Panc1 (cell line): ENCODE measurements at regions of chr5 and their contacts with region 1.

Region 1: DNA sequence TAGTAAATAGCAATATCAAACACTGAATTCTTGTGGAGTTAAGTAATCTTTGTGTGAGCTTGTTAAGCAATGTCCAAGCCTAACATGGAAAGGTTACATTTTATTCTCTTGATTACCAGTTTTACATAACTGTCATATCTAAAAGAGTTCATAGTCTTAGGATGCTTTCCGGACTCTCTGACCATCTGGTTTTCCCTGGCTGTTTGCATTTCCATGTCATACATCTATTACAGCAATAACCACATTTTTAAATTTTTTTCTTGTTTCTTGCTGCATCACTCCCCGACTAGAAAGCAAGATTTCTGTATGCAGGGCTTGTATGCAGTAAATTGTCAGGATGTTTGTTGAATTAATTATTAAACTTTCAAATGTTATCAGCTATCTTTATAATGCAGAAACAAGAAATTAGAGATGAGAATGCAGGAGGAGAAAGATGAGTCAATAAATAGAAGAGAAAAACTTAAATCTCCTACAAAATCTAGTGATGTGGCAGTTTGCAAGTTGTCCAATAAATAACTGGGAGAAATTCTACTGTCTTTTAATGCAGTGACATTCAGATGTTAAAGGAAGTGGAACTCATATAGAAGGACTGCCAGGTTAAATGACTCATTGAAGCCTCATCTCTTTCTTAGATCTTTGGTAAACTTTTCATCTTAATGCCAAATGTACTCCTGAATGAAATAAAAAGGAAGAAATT is 179.6 kb upstream of the SGCD start:
- DNase-seq: no peak
- ATAC-seq: no peak
- H3K4me3 ChIP-seq: no peak overlapping the region
- H3K27ac ChIP-seq: no peak overlapping the region
- H3K4me1 ChIP-seq: no peaks in the 10 kb centered on the region
- H3K27me3 ChIP-seq: no peaks in the 10 kb centered on the region
- CTCF ChIP-seq: no peak

Region 2: DNA sequence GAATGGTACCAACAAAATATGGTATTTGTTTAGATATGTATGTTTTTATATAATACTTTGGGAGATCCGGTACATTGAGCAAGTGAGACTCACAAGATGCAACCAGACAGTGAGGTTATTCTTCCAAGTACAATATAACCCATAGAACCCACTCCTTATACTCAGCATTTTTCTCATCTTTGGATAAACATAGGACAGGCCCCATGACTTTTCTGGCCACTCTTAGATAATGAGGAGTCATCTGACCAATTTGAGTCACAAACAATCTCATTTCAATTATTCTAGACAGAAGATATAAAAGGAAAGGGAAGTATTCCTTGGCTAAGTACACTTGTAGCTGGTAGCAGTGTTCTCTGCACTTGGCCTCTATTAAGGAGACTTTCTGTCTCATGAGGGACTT is 329.8 kb after region 1 on chr5:
- CTCF ChIA-PET with region 1: interaction called, 10 read pairs
- POLR2A ChIA-PET with region 1: no interaction called
- in situ Hi-C with region 1: no loop called
- intact Hi-C with region 1: no loop called
- DNase-seq: no peak
- ATAC-seq: no peak
- H3K4me3 ChIP-seq: no peak overlapping the region
- H3K27ac ChIP-seq: no peak overlapping the region
- H3K4me1 ChIP-seq: no peaks in the 10 kb centered on the region
- H3K27me3 ChIP-seq: no peaks in the 10 kb centered on the region
- CTCF ChIP-seq: no peak